K562 (cell line): ENCODE measurements at regions of chr4 and their contacts with region 1.

Region 1: DNA sequence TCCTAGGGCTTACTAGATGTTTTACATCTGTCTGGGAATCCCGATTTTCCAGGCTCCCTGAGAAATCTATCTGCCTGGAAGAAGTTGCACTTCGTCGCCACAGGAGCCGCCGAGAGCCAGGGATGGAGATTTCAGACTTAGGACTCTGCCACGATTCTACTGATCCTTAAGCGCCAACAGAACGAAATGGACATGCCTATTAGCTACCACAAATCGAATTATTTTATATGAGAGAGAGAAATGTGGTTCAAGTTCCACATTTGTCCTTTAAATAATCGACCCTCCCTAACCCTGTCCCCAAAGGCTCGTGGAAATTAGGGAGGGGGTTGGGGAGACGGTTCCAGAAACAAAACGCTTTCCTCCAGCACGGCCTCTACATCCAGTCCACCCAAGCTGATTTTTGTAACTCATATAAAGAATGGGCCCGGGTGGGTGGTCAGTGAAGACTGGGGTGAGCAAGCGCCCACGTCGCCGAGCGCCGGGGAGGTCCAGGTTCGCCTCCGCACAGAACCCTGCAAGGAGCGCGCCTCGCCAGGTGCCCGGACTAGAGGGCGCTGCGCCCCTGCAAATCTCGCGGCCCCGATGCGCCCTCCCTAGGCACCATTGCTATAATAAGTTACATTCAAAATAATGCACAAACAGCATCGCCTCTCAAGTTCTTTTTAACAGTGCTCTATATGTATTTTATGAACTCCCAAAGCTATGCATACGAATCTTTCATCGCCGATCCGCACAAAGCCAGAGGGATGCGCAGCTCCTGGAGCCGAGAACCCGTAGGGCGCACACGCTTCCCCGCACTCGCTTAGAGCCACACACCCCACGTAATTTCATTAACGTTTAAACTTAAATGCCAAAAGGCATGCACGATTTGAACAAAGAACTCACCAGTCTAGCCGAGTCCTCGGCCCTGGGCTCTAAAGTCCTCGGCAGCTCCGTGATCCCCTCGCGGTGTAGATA is 2.1 kb upstream of the FAT1 start:
- DNase-seq: peak; percentile 52 to 82 (median 69)
- ATAC-seq: peak; percentile 80
- H3K4me3 ChIP-seq: peak overlapping the region; percentile 58
- H3K27ac ChIP-seq: no peak overlapping the region
- H3K4me1 ChIP-seq: peaks cover 15 to 39% of the 10 kb centered on the region in 2 experiments; a peak in 4 of 5 replicates
- H3K27me3 ChIP-seq: peaks cover 11 to 34% of the 10 kb centered on the region in 2 experiments; a peak in 4 of 5 replicates
- CTCF ChIP-seq: peak; percentile 71 to 97 (median 90)
- EP300 ChIP-seq: no peak
- POLR2A ChIP-seq: no peak
- RAD21 ChIP-seq: peak; percentile 79 to 86

Region 2: DNA sequence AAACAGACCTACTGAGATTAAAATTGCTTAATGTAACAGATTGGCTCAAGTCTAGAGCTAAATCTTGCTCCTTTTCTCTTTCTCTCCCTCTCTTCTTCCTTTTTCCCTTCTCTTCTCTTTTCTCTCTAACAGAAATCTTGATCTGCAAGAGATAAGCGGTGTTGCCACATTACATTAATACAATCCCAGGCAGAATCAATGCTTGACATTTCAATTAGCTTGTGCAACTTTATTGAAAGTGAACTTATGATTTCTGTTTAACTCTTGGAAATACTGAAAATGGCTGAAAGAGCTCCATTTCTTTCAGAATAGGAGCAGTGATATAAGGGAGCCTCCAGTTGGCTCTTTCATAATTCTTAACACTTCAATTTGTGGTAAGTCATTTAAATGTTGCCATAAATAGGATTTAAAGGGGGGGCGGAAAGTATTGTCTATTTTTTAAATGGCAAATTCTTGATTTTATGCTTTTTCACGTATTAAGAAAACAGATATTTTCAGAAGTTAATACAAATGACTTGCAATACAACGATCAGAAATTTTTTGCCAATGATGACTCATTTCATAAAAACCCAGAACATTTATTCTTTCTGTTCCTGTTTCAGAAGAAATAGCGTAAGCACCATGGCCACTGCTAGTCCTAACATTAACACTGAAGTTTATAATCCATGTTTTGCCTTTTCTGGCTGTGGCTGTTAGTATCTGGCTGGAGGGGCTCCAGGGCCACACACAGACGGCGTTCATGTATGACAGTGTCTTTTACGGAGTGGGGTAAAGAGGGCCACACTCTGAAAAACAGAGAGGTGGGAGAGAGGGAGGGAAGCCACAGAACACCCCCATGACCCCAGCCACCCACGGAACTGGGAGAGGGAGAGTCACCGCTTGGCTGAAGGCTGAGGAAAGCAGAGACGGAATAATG is 113.6 kb after region 1 on chr4:
- CTCF ChIA-PET with region 1: no interaction called
- POLR2A ChIA-PET with region 1: no interaction called
- in situ Hi-C with region 1: no loop called
- intact Hi-C with region 1: loop called (anchors 5 kb)
- DNase-seq: peak; percentile 32 to 62 (median 49)
- ATAC-seq: peak; percentile 68
- H3K4me3 ChIP-seq: peak overlapping the region; percentile 32
- H3K27ac ChIP-seq: peak overlapping the region; percentile 92
- H3K4me1 ChIP-seq: peaks cover 10 to 18% of the 10 kb centered on the region in 2 experiments
- H3K27me3 ChIP-seq: no peaks in the 10 kb centered on the region
- CTCF ChIP-seq: no peak
- EP300 ChIP-seq: no peak
- POLR2A ChIP-seq: no peak
- RAD21 ChIP-seq: no peak

Region 3: GRCh38 chr4:186946682-186947294 is 221.0 kb after region 1 on chr4:
- CTCF ChIA-PET with region 1: no interaction called
- POLR2A ChIA-PET with region 1: no interaction called
- in situ Hi-C with region 1: no loop called
- intact Hi-C with region 1: loop called (anchors 2 kb)
- DNase-seq: peak; percentile 22 to 58 (median 37)
- ATAC-seq: peak; percentile 98
- H3K4me3 ChIP-seq: no peak overlapping the region
- H3K27ac ChIP-seq: no peak overlapping the region
- H3K4me1 ChIP-seq: peaks cover 0 to 4% of the 10 kb centered on the region in 2 experiments; a peak in 1 of 5 replicates
- H3K27me3 ChIP-seq: peaks cover 7 to 25% of the 10 kb centered on the region in 2 experiments; a peak in 3 of 5 replicates
- CTCF ChIP-seq: peak; percentile 58 to 84 (median 70); a peak in 5 of 6 replicates
- EP300 ChIP-seq: no peak
- POLR2A ChIP-seq: no peak
- RAD21 ChIP-seq: peak; percentile 33 to 66; a peak in 2 of 4 replicates

Region 4: DNA sequence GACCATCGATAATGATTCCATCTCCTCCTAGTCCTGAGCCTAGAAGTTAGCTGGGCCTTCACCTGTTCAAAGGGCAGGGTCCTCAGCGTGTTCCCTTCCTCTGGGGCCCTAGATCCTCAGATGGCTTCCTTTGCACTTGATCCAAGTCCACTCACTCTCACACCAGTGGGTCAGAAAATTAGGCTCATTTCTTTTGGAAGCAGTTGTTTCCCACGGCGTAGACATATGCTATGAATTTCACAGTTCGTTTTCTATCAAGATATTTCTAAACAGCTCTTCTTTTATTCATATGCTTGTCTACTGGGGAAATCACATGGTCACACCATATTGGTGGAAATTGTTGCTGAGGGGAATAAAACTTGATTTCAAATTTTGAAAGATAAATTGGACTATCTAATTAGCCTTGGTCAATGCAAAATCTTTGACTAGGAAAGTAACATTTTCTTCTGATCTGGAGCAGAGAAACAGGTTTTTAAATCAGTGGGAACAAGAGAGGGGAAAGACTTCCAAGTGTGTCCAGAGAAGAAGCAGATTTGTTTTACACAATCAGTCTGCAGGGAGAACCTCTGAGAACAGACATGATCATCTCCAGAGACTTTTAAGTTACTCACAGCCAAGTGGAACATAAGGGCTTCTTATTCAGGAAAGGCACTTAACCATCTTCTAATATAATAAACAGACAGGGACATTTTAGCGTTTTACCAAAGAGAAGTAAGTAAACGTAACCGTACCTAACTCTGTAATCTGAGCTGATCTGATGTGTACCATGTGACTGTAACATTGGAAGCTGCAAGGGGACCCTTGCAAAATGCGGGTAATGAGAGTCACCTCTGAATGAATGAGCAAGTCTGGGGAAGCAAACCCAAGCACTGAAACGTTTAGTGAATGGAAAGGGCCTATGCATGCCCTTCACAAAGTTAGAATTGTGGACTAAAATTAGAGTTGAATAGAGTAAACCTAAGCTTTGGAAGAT is 453.6 kb after region 1 on chr4:
- CTCF ChIA-PET with region 1: no interaction called
- POLR2A ChIA-PET with region 1: no interaction called
- in situ Hi-C with region 1: no loop called
- intact Hi-C with region 1: loop called (anchors 5 kb)
- DNase-seq: no peak
- ATAC-seq: no peak
- H3K4me3 ChIP-seq: no peak overlapping the region
- H3K27ac ChIP-seq: no peak overlapping the region
- H3K4me1 ChIP-seq: no peaks in the 10 kb centered on the region
- H3K27me3 ChIP-seq: peaks cover 0 to 12% of the 10 kb centered on the region in 2 experiments; a peak in 2 of 5 replicates
- CTCF ChIP-seq: no peak
- EP300 ChIP-seq: no peak
- POLR2A ChIP-seq: no peak
- RAD21 ChIP-seq: no peak

Region 5: DNA sequence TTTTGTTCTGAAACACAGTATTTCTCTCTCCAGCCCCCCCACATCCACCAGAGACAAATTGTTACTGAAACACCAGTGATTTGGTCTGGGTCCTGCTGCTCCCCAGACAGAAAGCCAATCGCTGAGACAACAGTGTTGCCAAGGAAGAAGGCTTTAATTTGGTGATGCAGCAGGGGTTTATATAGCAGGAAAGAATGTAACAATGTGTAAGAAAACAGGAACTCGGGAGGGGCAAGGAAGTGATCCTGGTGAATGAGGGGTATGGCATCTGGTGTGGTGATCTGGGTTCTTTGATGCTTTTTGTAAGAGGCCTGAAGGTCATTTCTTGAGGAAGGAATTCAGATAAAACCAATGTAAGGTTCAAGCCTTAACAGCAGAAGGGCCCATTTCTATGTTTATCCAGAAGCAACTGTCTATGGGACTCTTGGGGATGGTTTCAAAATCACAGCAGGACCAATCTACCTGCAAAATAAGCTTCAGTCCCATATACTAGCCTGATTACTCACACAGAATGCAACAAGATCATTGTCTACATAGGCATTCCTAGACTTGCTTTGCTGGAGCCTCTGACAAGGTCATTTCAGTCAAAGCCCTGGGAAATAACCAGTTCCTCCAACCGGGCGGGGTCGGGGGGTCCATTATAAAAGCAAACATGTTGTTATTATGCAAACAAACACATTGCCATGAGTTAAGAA is 824.7 kb after region 1 on chr4:
- CTCF ChIA-PET with region 1: no interaction called
- POLR2A ChIA-PET with region 1: no interaction called
- in situ Hi-C with region 1: loop called (anchors 10 kb)
- intact Hi-C with region 1: no loop called
- DNase-seq: no peak
- ATAC-seq: no peak
- H3K4me3 ChIP-seq: no peak overlapping the region
- H3K27ac ChIP-seq: no peak overlapping the region
- H3K4me1 ChIP-seq: no peaks in the 10 kb centered on the region
- H3K27me3 ChIP-seq: no peaks in the 10 kb centered on the region
- CTCF ChIP-seq: no peak
- EP300 ChIP-seq: no peak
- POLR2A ChIP-seq: no peak
- RAD21 ChIP-seq: no peak